ENCODE measurements at regions of chr5 and their contacts with region 1.

Region 1: DNA sequence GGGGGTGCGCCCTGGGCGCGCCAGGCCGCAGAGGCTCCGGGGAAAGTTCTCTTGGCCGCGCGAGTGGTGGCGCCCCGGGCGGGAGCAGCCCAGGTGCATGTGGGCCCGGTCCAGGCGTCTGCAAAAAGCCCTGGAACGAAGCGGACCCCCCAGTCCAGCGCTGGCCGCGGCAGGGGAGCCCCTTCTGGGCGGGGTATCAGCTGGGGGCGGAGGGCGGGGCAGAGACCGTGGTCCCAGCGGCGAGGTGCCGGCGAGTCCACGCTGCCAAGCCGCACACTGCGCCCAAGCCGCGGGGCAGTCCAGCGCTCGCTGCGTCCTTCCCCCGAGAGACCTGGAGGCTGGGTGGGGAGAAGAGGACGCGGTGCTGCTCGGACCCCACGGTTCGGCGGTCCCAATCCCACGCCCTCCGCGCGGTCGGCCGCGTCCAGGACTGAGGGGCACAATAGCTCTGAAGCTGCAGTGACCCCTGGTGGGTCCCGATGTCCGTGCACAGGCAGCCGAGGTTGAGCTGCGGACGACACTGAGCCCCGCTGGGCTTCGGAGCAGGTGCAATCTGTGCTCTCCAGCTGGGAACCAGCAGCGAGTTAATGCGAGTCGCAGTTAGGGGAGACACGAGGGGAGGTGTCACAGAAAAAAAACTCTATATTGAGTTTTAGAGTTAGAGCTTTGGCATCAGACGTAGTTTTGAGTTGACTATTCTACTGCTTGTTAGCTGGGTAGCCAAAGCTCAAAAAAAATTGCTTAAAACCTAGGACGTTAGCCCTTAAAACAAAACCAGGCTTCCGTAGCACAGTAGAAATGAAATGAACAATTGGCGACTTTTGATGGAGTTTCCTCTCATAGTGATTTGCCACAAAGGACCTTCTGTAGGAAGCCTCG is 1.1 kb upstream of the EPB41L4A start:
- DNase-seq: peak; percentile 20 to 87 (median 80)
- H3K4me3 ChIP-seq: peak overlapping the region; percentile 53 to 89 (median 74)
- H3K27ac ChIP-seq: peak overlapping the region in 43 of 59 donors; percentile 7 to 82 (median 62)
- H3K27me3 ChIP-seq: peaks cover 0 to 29% (median 0%) of the 10 kb centered on the region in 45 donors
- CTCF ChIP-seq: peak; percentile 40 to 94 (median 86)

Region 2: DNA sequence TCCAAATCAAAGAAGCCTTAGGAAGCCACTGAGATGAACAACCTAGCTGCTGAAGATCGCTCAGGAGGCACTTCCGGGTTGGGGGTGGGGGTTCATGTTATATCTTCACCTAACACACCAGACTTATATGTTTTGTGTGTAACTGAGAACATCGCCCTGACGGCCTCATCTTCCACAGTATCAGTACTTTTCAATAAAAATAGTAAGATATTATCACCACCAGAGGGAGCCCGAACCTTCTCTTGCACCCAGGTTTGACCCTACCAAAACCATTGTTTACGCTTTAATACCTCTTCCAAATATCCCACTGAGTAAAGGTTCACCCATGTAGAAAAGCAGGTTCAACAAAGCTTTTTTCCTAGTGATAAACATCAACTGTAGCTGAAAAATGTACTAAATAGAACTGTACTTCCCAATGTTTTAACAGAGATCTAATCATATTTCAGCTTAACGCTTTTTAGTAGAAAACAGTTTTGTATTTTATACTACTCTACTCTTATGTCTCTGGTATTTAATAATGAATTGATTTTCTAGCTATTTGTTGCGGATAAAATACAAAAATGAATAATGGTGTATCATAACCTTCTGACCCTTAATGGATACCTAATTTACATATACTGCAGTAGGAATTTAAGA is 245.1 kb before region 1 on chr5:
- intact Hi-C with region 1: loop called in 1 of 2 experiments (anchors 10 kb)
- DNase-seq: no peak
- H3K4me3 ChIP-seq: peak overlapping the region in 10 of 59 donors; percentile 1 to 31 (median 18)
- H3K27ac ChIP-seq: no peak overlapping the region
- H3K27me3 ChIP-seq: no peaks in the 10 kb centered on the region
- CTCF ChIP-seq: peak; percentile 61 to 85 (median 74)

Region 3: DNA sequence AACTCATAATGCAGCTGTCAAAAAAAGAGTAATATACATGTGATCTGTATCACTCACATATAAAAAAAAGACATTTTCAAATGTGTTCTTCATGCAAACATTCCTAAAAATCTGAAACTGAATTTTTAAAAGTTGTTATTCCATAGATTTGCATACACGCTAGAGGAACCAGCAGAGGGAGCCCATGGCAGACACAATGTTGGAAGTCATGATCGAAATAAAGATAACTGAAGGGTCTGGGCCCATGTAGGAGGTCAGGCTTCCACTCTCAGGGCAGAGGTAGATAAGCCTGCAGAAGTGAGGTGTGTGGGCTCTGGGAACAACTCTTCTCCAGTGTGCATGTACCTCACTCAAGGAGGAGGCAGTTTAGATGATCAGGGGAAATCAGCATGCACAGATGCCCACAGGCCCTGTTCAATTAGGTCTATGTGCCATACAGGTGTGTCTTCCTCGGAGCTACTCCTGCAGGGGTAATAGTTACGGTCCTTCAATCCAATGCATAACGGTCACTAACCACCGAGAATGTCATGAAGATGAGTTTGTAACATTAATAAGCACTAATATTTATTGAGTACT is 209.7 kb before region 1 on chr5:
- intact Hi-C with region 1: loop called (anchors 2 kb)
- DNase-seq: peak in 5 of 10 donors; percentile 18 to 66 (median 49)
- H3K4me3 ChIP-seq: no peak overlapping the region
- H3K27ac ChIP-seq: no peak overlapping the region
- H3K27me3 ChIP-seq: no peaks in the 10 kb centered on the region
- CTCF ChIP-seq: peak; percentile 29 to 81 (median 68)

Region 4: DNA sequence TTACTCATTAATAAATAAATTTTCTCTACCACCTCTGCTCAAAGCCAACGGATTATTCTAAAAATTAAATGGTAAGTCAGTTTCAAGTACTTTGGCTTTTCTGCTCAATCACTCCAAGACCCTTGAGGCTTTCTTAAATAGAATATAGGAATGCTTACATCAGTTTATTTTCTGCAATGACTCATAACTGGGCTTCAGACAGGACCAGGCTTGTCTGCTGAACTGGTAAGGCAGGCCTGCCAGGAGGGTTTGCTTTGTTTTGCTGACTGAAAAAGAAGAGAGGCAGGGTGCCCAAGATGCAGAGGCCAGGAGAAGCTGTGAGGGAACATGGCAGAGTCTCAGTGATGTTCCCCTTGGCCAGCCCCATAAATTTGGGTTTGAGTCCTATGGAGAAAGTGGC is 59.2 kb after region 1 on chr5:
- intact Hi-C with region 1: loop called in 1 of 2 experiments (anchors 5 kb)
- DNase-seq: no peak
- H3K4me3 ChIP-seq: no peak overlapping the region
- H3K27ac ChIP-seq: peak overlapping the region in 4 of 59 donors; percentile 15 to 93 (median 35)
- H3K27me3 ChIP-seq: no peaks in the 10 kb centered on the region
- CTCF ChIP-seq: no peak

Measured in dorsolateral prefrontal cortex (tissue), 120 donors.